Breast epithelium (tissue), 4 donors: ENCODE measurements at regions of chr18 and their contacts with region 1.

Region 1: GRCh38 chr18:77714716-77715115 is 465.1 kb downstream of the GALR1 start:
- DNase-seq: no peak
- H3K4me3 ChIP-seq: no peak overlapping the region
- H3K27ac ChIP-seq: no peak overlapping the region
- H3K4me1 ChIP-seq: no peaks in the 10 kb centered on the region
- H3K27me3 ChIP-seq: peaks cover 0 to 19% of the 10 kb centered on the region in 2 donors
- CTCF ChIP-seq: no peak
- POLR2A ChIP-seq: no peak

Region 2: DNA sequence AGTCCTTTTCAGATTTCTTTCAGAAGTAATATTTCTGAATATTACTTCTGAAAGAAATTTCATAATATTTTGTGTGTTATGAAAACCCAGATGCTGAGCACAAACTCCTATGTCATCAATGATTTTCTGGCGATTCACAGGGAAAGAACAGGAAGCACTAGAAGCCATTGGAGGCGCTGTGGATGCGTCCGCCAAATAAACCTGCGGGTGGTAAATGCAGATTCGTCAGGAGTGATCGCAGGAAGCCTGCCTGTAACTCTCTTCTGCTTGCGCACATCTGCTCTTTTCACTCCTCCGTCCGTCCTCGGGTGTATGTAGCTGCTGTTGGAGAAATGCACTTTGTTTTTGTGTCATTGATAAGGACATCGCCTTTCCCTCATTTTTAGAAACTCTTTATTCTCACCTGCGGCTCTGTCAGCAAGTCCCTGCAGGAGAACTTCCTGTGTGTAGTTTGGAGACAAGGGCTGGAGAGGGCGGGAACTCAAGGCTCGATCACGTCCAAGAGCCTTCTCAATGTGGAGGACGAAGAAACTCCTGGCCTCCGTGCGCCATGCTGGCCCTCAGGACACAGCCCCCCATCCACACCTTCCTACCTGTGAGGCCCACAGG is 18.7 kb after region 1 on chr18:
- intact Hi-C with region 1: loop called (anchors 1 kb)
- DNase-seq: no peak
- H3K4me3 ChIP-seq: no peak overlapping the region
- H3K27ac ChIP-seq: no peak overlapping the region
- H3K4me1 ChIP-seq: no peaks in the 10 kb centered on the region
- H3K27me3 ChIP-seq: peaks cover 0 to 11% of the 10 kb centered on the region in 2 donors
- CTCF ChIP-seq: no peak
- POLR2A ChIP-seq: no peak